ENCODE measurements at regions of chr18 and their contacts with region 1.

Region 1: GRCh38 chr18:2948038-2948437 is 64.9 kb downstream of the LPIN2 start:
- DNase-seq: no peak
- ATAC-seq: 0 out of 2 replicates have a peak, but pooled peaks have one; percentile 48
- H3K4me3 ChIP-seq: no peak overlapping the region
- H3K27ac ChIP-seq: peak overlapping the region; percentile 3; the same call in 1 of the 2 replicates
- H3K4me1 ChIP-seq: peaks cover 4% of the 10 kb centered on the region
- H3K27me3 ChIP-seq: no peaks in the 10 kb centered on the region
- CTCF ChIP-seq: peak; percentile 67

Region 2: GRCh38 chr18:2325308-2325849 is 622.7 kb before region 1 on chr18:
- CTCF ChIA-PET with region 1: no interaction called
- POLR2A ChIA-PET with region 1: no interaction called
- in situ Hi-C with region 1: no loop called
- intact Hi-C with region 1: no loop called
- DNase-seq: no peak
- ATAC-seq: no peak
- H3K4me3 ChIP-seq: no peak overlapping the region
- H3K27ac ChIP-seq: no peak overlapping the region
- H3K4me1 ChIP-seq: no peaks in the 10 kb centered on the region
- H3K27me3 ChIP-seq: no peaks in the 10 kb centered on the region
- CTCF ChIP-seq: no peak

Region 3: GRCh38 chr18:2846636-2847364 is 101.2 kb before region 1 on chr18 and contains the start of gene EMILIN2:
- CTCF ChIA-PET with region 1: no interaction called
- POLR2A ChIA-PET with region 1: no interaction called
- in situ Hi-C with region 1: no loop called
- intact Hi-C with region 1: no loop called
- DNase-seq: no peak
- ATAC-seq: peak; percentile 29
- H3K4me3 ChIP-seq: peak within 1 kb of the TSS; percentile 29 to 42
- H3K27ac ChIP-seq: no peak within 1 kb of the TSS
- H3K4me1 ChIP-seq: peaks cover 3% of the 10 kb centered on the region; the same call in 1 of the 2 replicates
- H3K27me3 ChIP-seq: peaks cover 40% of the 10 kb centered on the region
- CTCF ChIP-seq: no peak; the same call in 1 of the 2 replicates
- total RNA-seq, gene EMILIN2: 18.3 TPM

Region 4: DNA sequence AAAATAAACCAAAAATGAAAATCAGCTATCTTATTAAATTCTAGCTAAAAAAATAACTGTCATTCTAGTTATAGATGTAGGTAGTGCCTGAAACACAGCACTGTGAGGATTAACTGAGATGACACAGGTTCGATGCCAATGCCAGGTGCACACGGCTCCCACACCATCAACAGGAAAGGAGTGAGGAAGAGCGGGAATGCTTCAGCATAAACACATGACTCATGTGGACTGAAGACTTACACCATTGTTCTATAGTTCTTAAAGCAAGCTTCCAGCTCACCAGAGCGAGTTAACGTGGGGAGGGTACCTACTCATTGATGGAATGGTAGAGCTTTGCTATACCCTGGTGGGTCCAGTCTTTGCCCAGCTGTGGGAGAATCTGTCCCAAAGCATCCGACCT is 24.6 kb before region 1 on chr18:
- CTCF ChIA-PET with region 1: no interaction called
- POLR2A ChIA-PET with region 1: interaction called, 22 read pairs
- in situ Hi-C with region 1: no loop called
- intact Hi-C with region 1: no loop called
- DNase-seq: no peak
- ATAC-seq: no peak
- H3K4me3 ChIP-seq: no peak overlapping the region
- H3K27ac ChIP-seq: no peak overlapping the region
- H3K4me1 ChIP-seq: no peaks in the 10 kb centered on the region
- H3K27me3 ChIP-seq: no peaks in the 10 kb centered on the region
- CTCF ChIP-seq: no peak

Measured in Panc1 (cell line).